Gastrocnemius medialis (tissue), 4 donors: ENCODE measurements at regions of chr1 and their contacts with region 1.

Region 1: GRCh38 chr1:229558571-229559335 is at the start of gene ABCB10:
- DNase-seq: peak; percentile 93 to 96
- ATAC-seq: peak; percentile 92
- H3K4me3 ChIP-seq: peak within 1 kb of the TSS; percentile 76 to 95 (median 86)
- H3K27ac ChIP-seq: peak within 1 kb of the TSS; percentile 85 to 95 (median 90)
- H3K4me1 ChIP-seq: peaks cover 39 to 48% of the 10 kb centered on the region in 2 donors
- H3K27me3 ChIP-seq: no peaks in the 10 kb centered on the region
- CTCF ChIP-seq: peak; percentile 68 to 81 (median 80)
- POLR2A ChIP-seq: peak; percentile 72 to 73
- total RNA-seq, gene ABCB10: 14.5 to 29.9 (median 19.3) TPM

Region 2: DNA sequence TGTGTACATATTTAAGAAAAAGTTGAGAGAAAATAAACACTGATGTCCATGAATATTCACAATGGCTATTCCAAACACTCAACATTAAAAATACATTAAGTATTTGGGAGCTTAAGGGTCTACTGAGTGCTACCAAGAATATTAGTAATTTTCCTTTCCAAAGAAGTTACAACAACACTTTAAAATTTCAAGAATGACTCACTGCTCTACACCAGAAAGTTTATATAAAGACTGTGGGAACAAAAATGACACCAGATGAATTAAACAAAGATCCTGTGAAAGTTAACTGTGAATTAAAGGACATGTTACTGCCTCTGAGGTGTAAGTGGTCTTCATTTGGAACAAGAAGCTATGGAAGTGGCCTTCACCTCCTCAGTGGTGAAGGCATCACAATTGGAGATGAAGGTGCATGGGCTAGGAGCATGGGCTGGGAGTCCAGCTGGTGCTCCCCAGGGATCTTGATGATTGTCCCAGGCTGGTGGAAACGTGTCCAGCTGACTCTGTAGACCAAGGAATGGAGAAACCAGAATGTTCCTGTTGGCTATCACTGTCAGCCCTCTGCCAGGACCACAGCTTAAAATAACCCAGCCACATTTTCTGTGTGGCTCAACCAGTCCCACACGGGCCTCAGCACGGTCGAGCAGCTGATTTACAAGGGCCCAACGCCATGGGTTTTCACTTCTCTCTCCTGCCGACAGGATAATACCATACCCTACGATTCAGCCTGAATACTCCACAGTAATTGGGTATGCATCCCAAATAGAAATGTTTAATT is 38.4 kb after region 1 on chr1:
- in situ Hi-C with region 1: no loop called
- intact Hi-C with region 1: loop called (anchors 2 kb)
- DNase-seq: peak; percentile 68 to 80
- ATAC-seq: peak; percentile 99
- H3K4me3 ChIP-seq: peak overlapping the region in 1 of 4 donors; percentile 1
- H3K27ac ChIP-seq: peak overlapping the region; percentile 75 to 84 (median 81)
- H3K4me1 ChIP-seq: peaks cover 26 to 34% of the 10 kb centered on the region in 2 donors
- H3K27me3 ChIP-seq: no peaks in the 10 kb centered on the region
- CTCF ChIP-seq: peak; percentile 19 to 54 (median 38)
- POLR2A ChIP-seq: peak in 1 of 2 donors; percentile 11

Region 3: GRCh38 chr1:229625915-229626831 is 67.4 kb after region 1 on chr1 and contains the starts of genes TAF5L and URB2:
- in situ Hi-C with region 1: loop called in 3 of 4 experiments (anchors 5 to 10 kb)
- intact Hi-C with region 1: loop called (anchors 1 kb)
- DNase-seq: peak; percentile 80 to 85
- ATAC-seq: peak; percentile 77 to 82
- H3K4me3 ChIP-seq: peak within 1 kb of the TSS; percentile 92 to 100 (median 98)
- H3K27ac ChIP-seq: peak within 1 kb of the TSS; percentile 92 to 99 (median 96)
- H3K4me1 ChIP-seq: peaks cover 49 to 51% of the 10 kb centered on the region in 2 donors
- H3K27me3 ChIP-seq: no peaks in the 10 kb centered on the region
- CTCF ChIP-seq: peak in 3 of 5 experiments; percentile 24 to 35 (median 28)
- POLR2A ChIP-seq: peak; percentile 86 to 91
- total RNA-seq, gene TAF5L: 14.5 to 37.4 (median 24.3) TPM
- total RNA-seq, gene URB2: 9.9 to 20.6 (median 13.4) TPM

Region 4: GRCh38 chr1:229637746-229638145 is 79.0 kb after region 1 on chr1:
- in situ Hi-C with region 1: no loop called
- intact Hi-C with region 1: no loop called
- DNase-seq: no peak
- ATAC-seq: no peak
- H3K4me3 ChIP-seq: no peak overlapping the region
- H3K27ac ChIP-seq: no peak overlapping the region
- H3K4me1 ChIP-seq: peaks cover 22 to 23% of the 10 kb centered on the region in 2 donors
- H3K27me3 ChIP-seq: no peaks in the 10 kb centered on the region
- CTCF ChIP-seq: no peak
- POLR2A ChIP-seq: no peak

Region 5: DNA sequence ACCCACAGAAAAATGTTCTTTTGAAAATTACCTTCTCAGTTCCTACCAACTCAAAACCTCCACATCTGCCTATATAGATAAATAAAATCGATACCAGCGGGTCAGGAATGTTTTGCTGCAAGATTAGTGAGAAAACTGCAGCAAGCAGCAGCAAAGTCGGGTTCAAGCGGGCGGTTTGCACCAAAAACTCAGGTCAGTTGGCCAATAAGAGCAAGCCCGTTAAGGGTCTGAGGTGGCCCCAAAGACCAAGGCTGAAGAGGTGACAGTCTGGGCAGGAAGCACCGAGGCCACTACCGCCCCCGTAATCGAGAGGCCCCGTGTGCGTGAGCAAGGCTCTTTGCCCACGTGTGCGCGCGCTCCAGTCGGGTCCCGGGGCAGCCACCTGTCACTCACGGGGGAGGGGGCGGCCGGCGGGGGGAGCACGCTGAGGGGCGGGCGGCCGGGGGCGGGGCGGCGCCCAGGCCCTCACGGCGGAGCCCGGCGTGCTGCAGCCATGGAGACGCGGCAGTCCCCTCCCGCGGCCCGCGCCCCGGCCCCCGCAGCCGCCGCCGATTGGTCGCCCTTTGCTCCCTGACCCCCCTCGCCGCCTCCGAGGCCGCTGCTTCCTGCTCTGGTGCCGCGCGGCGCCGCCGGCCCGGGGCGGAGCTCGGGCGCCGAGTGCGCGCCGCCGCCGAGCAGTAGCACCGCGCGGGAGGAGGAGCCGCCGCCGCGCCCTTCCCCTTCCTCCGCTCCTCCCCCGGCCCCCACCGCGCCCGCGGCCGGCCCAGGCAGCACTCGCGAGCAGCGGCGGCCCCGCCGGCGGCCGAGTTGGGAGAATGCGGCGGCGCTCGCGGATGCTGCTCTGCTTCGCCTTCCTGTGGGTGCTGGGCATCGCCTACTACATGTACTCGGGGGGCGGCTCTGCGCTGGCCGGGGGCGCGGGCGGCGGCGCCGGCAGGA is 508.0 kb after region 1 on chr1 and contains the start of gene GALNT2:
- in situ Hi-C with region 1: no loop called
- intact Hi-C with region 1: loop called (anchors 5 kb)
- DNase-seq: peak; percentile 73 to 85
- ATAC-seq: peak; percentile 76 to 77
- H3K4me3 ChIP-seq: peak within 1 kb of the TSS; percentile 73 to 88 (median 80)
- H3K27ac ChIP-seq: peak within 1 kb of the TSS; percentile 90 to 97 (median 97)
- H3K4me1 ChIP-seq: peaks cover 42 to 43% of the 10 kb centered on the region in 2 donors
- H3K27me3 ChIP-seq: no peaks in the 10 kb centered on the region
- CTCF ChIP-seq: peak in 1 of 5 experiments; percentile 11
- POLR2A ChIP-seq: peak; percentile 94 to 96
- total RNA-seq, gene GALNT2: 73.7 to 106 (median 78.3) TPM